Activated CD4-positive, alpha-beta memory T cell treated with anti-CD3 and anti-CD28 coated beads for 36 hours (primary cell): ENCODE measurements at regions of chr14 and their contacts with region 1.

Region 1: DNA sequence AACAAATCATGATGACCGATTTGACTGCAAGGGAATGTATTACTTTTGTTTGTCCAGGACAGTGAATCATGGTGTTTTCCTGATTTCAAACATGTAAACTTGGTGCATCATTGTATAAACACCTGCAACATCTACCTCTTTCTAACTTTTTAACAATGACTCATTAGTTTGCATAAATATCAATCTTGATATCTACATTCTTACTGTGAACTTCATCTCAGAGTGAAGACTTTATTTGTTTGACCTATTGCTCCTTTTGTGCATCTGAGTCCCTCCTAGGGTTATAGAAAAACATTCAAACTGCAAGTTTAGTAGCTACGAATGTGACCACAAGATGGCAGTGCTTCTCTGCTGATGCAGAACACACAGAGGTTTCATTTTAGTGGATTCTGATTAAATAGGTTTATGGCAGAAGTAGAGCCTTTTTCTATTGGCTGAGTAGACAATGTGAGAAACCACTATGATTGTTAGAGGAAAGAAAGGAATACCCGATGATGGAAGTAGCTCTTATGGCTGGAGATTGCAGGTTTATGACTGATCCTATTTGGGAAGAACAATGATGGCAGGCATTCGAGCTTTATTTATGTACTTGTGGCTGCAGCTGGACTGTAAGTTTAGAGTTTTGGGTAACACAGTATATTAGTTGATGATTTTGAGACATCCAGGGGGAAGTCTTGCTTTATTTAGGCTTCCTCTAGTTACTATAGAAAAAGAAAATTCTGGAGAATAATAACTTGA is 244.2 kb upstream of the OR4E1 start:
- DNase-seq: peak; percentile 61
- H3K4me3 Mint-ChIP-seq: peak overlapping the region; percentile 73
- H3K27ac Mint-ChIP-seq: peak overlapping the region; percentile 73
- H3K4me1 Mint-ChIP-seq: peaks cover 58% of the 10 kb centered on the region
- H3K27me3 Mint-ChIP-seq: no peaks in the 10 kb centered on the region

Region 2: GRCh38 chr14:21852061-21852664 is 65.7 kb before region 1 on chr14:
- CTCF ChIA-PET with region 1: interaction called, 12 read pairs
- POLR2A ChIA-PET with region 1: no interaction called
- intact Hi-C with region 1: no loop called
- DNase-seq: peak; percentile 83
- H3K4me3 Mint-ChIP-seq: peak overlapping the region; percentile 68
- H3K27ac Mint-ChIP-seq: peak overlapping the region; percentile 90
- H3K4me1 Mint-ChIP-seq: peaks cover 10% of the 10 kb centered on the region
- H3K27me3 Mint-ChIP-seq: peaks cover 3% of the 10 kb centered on the region

Region 3: GRCh38 chr14:21894003-21894897 is 23.6 kb before region 1 on chr14:
- CTCF ChIA-PET with region 1: interaction called, 15 read pairs
- POLR2A ChIA-PET with region 1: no interaction called
- intact Hi-C with region 1: loop called (anchors 2 kb)
- DNase-seq: peak; percentile 73
- H3K4me3 Mint-ChIP-seq: peak overlapping the region; percentile 80
- H3K27ac Mint-ChIP-seq: peak overlapping the region; percentile 89
- H3K4me1 Mint-ChIP-seq: peaks cover 25% of the 10 kb centered on the region
- H3K27me3 Mint-ChIP-seq: no peaks in the 10 kb centered on the region

Region 4: DNA sequence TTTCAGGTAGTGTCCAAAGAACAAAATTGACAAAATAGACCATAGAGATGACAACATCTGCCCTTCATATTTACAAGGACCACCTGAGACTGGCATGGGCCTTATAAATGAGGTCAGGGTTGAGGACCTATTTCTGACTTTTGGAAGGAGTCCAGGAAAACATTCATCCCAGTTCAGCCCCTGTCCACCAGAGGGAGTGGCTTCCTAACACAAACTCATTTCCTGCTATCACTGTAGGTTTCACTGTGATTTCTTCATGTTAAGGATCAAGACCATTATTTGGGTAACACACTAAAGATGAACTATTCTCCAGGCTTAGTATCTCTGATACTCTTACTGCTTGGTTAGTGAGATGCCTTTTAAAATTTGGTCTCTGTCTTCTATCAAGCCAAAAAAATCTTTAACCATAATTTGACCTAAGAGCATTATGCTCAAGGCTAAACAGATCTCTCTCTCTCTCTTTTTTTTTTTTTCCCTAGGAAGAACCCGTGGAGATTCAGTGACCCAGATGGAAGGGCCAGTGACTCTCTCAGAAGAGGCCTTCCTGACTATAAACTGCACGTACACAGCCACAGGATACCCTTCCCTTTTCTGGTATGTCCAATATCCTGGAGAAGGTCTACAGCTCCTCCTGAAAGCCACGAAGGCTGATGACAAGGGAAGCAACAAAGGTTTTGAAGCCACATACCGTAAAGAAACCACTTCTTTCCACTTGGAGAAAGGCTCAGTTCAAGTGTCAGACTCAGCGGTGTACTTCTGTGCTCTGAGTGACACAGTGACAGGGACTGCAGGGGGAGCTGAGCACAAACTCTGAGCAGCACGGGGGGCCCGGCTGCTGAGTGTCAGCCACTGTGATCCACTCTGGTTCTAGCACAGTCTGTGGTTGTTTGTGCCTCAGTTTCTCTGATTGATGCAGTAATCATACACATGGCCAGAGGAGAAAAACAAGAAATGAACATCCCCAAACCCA is 23.3 kb after region 1 on chr14:
- CTCF ChIA-PET with region 1: interaction called, 5 read pairs
- POLR2A ChIA-PET with region 1: no interaction called
- intact Hi-C with region 1: loop called (anchors 2 kb)
- DNase-seq: peak; percentile 51
- H3K4me3 Mint-ChIP-seq: peak overlapping the region; percentile 60
- H3K27ac Mint-ChIP-seq: peak overlapping the region; percentile 75
- H3K4me1 Mint-ChIP-seq: peaks cover 17% of the 10 kb centered on the region
- H3K27me3 Mint-ChIP-seq: peaks cover 5% of the 10 kb centered on the region

Region 5: DNA sequence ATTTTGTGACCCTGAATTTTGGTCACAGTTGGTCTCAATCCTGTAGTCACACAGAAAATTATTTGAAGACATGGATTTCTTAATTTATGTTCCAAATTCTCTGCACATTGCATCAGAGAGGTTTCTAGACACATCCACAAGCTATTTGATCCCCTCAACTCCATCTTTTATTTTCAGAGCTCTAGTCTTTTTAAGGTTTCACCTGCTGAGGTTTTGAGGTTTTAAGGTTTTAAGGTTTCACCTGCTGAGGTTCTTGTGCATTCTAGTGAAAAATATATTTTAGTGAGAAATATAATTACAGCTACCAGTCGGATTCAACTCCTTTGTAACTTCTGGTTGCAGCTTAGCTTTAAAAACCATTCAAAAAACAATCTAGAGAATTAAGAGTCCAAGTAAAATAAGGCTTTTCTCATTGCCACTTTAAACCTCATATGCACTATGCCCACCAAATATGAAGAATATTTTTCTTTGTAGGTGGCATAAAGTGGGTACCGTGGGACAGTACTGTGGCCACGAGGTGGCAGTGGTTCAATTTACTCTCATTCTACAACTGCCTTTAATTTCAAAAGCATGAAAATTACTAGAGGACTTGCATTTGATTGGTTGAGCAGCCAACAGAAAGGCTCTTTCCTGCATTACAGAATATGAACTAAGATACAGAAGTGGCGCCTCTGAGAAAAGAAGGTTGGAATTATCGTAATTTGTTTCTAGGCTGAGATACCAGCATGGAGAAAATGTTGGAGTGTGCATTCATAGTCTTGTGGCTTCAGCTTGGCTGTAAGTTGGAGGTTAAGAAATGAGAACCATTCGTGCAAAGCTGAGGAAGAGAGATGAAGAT is 122.3 kb after region 1 on chr14:
- CTCF ChIA-PET with region 1: interaction called, 4 read pairs
- POLR2A ChIA-PET with region 1: no interaction called
- intact Hi-C with region 1: loop called (anchors 5 kb)
- DNase-seq: peak; percentile 52
- H3K4me3 Mint-ChIP-seq: peak overlapping the region; percentile 70
- H3K27ac Mint-ChIP-seq: peak overlapping the region; percentile 81
- H3K4me1 Mint-ChIP-seq: peaks cover 3% of the 10 kb centered on the region
- H3K27me3 Mint-ChIP-seq: no peaks in the 10 kb centered on the region